HCT116 (cell line): ENCODE measurements at regions of chr9 and their contacts with region 1.

Region 1: GRCh38 chr9:114919611-114920010 is 10.8 kb downstream of the TNFSF8 start:
- DNase-seq: no peak
- ATAC-seq: no peak
- H3K4me3 ChIP-seq: no peak overlapping the region
- H3K27ac ChIP-seq: no peak overlapping the region
- H3K4me1 ChIP-seq: no peaks in the 10 kb centered on the region
- H3K27me3 ChIP-seq: peaks cover 28% of the 10 kb centered on the region; the same call in 1 of the 2 replicates
- CTCF ChIP-seq: no peak
- POLR2A ChIP-seq: no peak
- RAD21 ChIP-seq: no peak

Region 2: DNA sequence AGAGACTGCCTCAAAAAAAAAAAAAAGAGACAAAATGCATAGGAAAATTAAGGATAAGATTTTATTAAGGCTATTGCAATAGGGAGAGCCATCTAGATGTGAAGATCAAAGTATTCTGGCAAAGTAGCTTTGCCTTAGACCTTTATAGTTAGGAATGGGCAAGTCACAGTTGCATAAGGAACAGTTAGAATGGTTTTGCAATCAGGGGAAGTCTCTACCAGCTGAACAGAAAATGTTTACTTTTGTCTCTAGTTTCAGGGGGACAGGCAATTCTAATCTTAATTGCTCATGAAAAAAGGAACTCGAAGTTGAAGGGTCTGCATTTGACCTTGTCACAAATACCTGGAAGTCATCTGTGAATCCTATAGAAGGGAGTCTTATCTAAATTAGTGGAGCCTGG is 345.2 kb before region 1 on chr9:
- CTCF ChIA-PET with region 1: no interaction called
- POLR2A ChIA-PET with region 1: no interaction called
- RAD21 ChIA-PET with region 1: no interaction called
- intact Hi-C with region 1: no loop called
- DNase-seq: no peak
- ATAC-seq: no peak
- H3K4me3 ChIP-seq: no peak overlapping the region
- H3K27ac ChIP-seq: no peak overlapping the region
- H3K4me1 ChIP-seq: no peaks in the 10 kb centered on the region
- H3K27me3 ChIP-seq: no peaks in the 10 kb centered on the region
- CTCF ChIP-seq: no peak
- POLR2A ChIP-seq: no peak
- RAD21 ChIP-seq: no peak

Region 3: GRCh38 chr9:114938687-114939575 is 19.3 kb after region 1 on chr9:
- CTCF ChIA-PET with region 1: no interaction called
- POLR2A ChIA-PET with region 1: no interaction called
- RAD21 ChIA-PET with region 1: no interaction called
- intact Hi-C with region 1: loop called (anchors 2 kb)
- DNase-seq: no peak
- ATAC-seq: no peak
- H3K4me3 ChIP-seq: no peak overlapping the region
- H3K27ac ChIP-seq: no peak overlapping the region
- H3K4me1 ChIP-seq: no peaks in the 10 kb centered on the region
- H3K27me3 ChIP-seq: peaks cover 8% of the 10 kb centered on the region; the same call in 1 of the 2 replicates
- CTCF ChIP-seq: no peak
- POLR2A ChIP-seq: no peak
- RAD21 ChIP-seq: no peak